HEK293 (cell line): ENCODE measurements at regions of chr16 and their contacts with region 1.

Region 1: DNA sequence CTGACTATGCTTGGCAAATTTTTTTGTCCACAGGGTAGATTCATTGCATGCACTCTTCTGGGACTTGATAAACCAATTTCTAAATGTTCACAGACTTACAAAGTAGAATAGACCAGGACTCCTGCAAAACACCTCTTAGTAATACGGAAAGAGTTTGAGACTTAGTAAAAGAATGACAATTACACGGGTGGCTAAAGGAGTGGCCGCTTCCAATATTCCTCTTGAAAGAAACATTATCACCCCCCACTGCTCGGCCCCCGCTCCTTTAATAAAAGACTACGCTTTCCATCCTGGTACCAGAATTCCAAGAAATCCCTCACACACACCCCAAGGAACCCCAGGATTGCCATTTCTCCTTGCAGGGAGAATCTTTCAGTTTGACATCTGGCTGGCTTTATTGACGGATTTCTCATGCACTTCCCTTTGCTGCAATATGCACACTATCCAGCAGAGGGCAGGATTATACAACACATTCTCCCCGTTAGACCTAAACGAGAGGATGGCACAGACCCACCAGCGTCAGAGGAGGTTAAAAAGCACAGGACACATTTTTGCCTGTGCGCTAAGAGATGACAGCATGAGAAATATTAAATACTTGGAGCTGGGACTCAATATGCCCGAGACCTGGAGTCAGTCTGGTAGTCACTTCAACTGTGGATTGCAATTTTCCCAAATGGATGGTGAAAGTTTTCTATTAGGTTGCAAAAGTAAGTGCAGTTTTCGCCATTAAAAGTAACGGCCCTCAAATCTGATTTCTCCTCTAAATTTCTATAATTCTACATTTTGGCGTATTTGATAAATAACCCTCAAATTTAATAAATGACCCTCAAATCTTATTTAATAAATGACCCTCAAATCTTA is 46.6 kb upstream of the NUDT7 start:
- H3K4me3 ChIP-seq: no peak overlapping the region
- H3K27ac ChIP-seq: no peak overlapping the region
- H3K4me1 ChIP-seq: no peaks in the 10 kb centered on the region
- CTCF ChIP-seq: peak; percentile 79

Region 2: GRCh38 chr16:77767211-77767610 is 91.5 kb after region 1 on chr16:
- CTCF ChIA-PET with region 1: no interaction called
- POLR2A ChIA-PET with region 1: no interaction called
- H3K4me3 ChIP-seq: no peak overlapping the region
- H3K27ac ChIP-seq: no peak overlapping the region
- H3K4me1 ChIP-seq: no peaks in the 10 kb centered on the region
- CTCF ChIP-seq: no peak

Region 3: GRCh38 chr16:77963185-77964044 is 287.7 kb after region 1 on chr16:
- CTCF ChIA-PET with region 1: interaction called, 35 read pairs
- POLR2A ChIA-PET with region 1: no interaction called
- H3K4me3 ChIP-seq: no peak overlapping the region
- H3K27ac ChIP-seq: no peak overlapping the region
- H3K4me1 ChIP-seq: no peaks in the 10 kb centered on the region
- CTCF ChIP-seq: no peak

Region 4: DNA sequence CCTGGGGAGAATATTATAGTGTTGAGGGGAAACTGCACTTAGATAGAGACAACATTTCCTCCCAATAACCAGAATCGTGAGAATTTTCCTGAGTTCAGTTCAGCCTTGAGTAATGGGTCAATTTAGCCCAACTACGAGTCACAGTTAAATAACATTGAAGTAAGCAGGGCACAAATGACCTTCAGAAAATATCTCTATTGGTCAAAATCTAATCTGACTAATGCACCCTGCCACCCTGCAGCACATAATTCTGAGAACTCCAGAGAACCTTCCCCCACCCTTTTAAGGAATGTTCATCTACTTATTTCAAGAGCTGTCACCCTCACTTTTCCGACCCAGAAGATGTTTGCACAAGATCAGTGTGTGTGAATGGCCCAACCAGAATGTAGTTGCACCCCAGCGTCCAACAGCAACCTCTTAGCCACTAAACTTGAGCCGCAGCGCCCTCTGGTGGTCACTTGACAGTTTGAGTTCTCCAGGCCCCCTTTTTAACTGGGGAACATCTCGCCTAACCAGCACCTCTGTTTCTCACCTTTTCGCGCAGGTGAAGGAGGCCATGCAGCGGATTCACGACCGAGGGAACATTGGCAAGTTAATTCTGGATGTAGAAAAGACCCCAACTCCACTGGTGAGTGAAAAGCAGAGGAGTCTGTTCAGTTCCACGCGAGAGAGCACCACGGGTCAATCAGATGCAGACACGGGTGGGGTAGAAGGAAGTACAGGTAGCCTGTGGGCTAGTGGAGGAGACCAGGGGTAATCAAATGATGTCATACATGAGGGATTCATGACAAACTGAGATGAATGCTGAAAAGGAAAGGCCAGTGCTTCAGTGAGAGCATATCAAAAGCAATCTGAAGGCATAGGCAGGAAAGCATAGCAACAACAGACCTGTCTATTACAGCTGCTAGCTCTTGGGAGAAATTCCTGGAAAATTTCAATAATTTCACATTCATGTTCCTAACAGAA is 295.9 kb after region 1 on chr16:
- CTCF ChIA-PET with region 1: interaction called, 57 read pairs
- POLR2A ChIA-PET with region 1: no interaction called
- H3K4me3 ChIP-seq: no peak overlapping the region
- H3K27ac ChIP-seq: no peak overlapping the region
- H3K4me1 ChIP-seq: no peaks in the 10 kb centered on the region
- CTCF ChIP-seq: peak; percentile 54